BJ (cell line): ENCODE measurements at regions of chr2 and their contacts with region 1.

Region 1: DNA sequence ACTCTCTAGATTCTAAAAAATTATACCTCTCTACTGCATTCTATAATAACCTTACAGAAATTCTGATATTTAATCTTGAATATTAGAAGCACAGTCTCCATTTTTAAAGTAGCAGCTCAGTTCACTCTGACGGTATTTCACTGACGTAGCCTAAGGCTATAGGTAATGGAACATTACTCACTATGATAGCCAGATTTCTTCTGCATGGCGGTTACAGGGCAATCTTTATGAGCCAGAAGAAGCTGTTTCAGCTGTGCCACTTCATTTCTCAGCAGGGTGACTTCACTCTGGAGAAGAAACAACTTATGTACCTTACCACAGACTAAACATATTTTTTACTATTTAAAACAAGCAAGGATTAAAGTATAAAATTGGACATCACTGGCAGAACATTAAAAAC is 75.3 kb upstream of the CHN1 start:
- DNase-seq: no peak
- H3K4me3 ChIP-seq: no peak overlapping the region
- H3K27me3 ChIP-seq: no peaks in the 10 kb centered on the region
- CTCF ChIP-seq: no peak

Region 2: DNA sequence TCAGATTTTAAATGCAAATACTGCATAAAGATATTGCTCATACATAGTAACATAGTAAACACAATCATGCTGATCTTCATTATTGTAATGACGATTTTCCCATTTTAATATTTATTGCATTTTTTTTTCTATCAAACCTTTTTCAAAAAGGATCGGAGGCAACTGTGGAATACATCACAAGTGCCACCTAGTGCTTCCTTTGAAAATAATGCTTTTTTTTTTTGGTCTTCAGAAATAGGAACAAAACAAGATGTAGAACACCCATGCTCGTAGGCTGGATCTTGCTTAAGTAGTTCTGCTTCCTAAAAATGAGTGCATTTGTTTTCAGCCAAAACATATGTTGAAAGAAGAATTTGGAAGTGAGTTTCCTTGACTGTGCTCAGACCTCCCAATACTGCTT is 557.9 kb before region 1 on chr2:
- CTCF ChIA-PET with region 1: no interaction called
- POLR2A ChIA-PET with region 1: no interaction called
- DNase-seq: no peak
- H3K4me3 ChIP-seq: no peak overlapping the region
- H3K27me3 ChIP-seq: peaks cover 4% of the 10 kb centered on the region; the same call in 1 of the 2 replicates
- CTCF ChIP-seq: peak; percentile 28; the same call in 1 of the 2 replicates

Region 3: DNA sequence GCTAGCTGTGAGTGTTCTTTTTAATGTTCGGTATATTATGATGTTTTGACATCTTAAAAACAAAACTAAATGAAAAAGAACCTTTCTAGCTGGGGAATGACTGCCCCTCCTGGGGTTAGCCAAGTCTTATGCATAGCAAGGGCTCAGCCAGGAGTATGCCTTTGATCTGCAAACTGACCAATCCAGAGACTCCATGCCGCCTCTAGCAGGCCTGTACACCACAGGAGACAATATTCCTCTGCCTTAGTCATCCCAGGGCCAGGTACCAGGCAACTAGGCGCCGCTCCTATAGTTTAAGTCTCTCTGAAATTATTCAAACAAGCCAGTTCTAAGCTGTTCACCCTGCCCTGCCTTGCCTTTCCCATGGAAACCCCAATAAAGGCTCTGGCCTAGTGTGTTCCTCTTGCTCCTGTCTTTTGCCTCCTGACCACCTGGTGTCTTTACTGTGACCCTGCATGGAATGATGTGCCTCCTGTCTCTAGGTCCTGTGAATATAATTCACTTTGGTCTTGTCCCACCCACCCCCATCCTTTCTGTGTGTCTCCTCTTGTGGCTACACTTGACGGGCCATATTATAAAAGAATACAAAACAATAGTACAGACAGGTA is 23.3 kb before region 1 on chr2:
- CTCF ChIA-PET with region 1: interaction called, 3 read pairs
- POLR2A ChIA-PET with region 1: interaction called, 11 read pairs
- DNase-seq: no peak
- H3K4me3 ChIP-seq: no peak overlapping the region
- H3K27me3 ChIP-seq: no peaks in the 10 kb centered on the region
- CTCF ChIP-seq: no peak

Region 4: GRCh38 chr2:175097297-175097696 is 16.8 kb after region 1 on chr2:
- CTCF ChIA-PET with region 1: no interaction called
- POLR2A ChIA-PET with region 1: interaction called, 18 read pairs
- DNase-seq: peak; percentile 37
- H3K4me3 ChIP-seq: no peak overlapping the region
- H3K27me3 ChIP-seq: no peaks in the 10 kb centered on the region
- CTCF ChIP-seq: no peak